Colonic mucosa (tissue), 4 donors: ENCODE measurements at regions of chr2 and their contacts with region 1.

Region 1: DNA sequence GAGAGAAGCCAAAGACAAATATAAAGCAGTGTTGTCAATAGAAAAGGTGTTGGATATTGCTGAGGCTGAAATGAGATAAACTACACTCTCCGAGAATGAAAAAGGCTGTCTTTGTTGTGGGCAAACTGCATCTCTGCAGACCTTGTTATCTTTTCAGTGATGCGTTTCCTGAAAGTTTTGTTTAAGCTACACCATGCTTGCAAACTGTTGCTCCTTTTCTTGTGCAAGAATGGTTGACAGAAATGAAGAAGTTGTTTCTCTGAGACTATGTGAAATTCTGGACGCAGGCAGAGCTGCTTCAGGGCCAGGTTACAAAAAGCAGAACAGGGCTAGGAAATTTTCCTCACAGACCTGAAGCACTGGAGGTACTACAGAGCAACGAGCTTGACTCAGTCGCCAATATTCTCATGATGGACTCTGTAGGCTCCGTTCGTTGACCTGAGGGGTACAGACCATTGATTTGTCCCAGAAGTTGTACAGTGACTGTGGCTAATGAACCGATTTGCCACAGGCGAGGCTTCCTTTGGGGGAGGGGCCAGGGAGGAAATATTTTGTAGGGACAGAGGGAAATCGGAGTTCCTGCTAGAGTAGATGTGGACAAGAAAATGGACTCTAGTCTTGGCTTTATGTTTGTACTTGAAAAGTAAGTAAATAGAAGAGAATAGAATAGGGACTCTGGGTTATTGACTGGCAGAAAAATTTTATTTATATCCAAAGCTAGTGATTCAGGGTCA is 3.5 kb upstream of the ATL2 start:
- DNase-seq: no peak
- H3K4me3 ChIP-seq: no peak overlapping the region
- H3K27ac ChIP-seq: no peak overlapping the region
- H3K4me1 ChIP-seq: no peaks in the 10 kb centered on the region
- H3K27me3 ChIP-seq: no peaks in the 10 kb centered on the region
- CTCF ChIP-seq: no peak

Region 2: GRCh38 chr2:37966326-37966725 is 414.2 kb before region 1 on chr2:
- intact Hi-C with region 1: no loop called
- DNase-seq: no peak
- H3K4me3 ChIP-seq: no peak overlapping the region
- H3K27ac ChIP-seq: no peak overlapping the region
- H3K4me1 ChIP-seq: no peaks in the 10 kb centered on the region
- H3K27me3 ChIP-seq: no peaks in the 10 kb centered on the region
- CTCF ChIP-seq: no peak

Region 3: DNA sequence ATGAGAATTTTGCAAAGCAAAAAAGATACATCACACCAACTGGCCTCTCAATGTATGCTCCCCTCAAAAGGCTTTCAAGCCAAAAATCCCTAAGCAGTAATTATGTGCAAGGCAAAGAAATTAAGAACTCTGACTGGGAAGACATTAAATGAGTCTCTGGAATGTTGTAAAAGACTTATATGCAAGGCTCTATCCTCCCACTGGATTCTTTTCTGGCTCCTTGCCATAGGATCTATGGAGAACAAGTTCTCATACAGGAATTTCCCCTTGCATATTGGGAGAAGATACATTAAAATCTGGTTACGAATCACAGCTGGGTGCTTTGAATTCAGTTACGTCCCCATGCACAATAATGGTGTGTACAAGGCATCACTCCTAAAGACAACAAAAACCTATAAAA is 69.9 kb after region 1 on chr2:
- intact Hi-C with region 1: loop called (anchors 10 kb)
- DNase-seq: no peak
- H3K4me3 ChIP-seq: no peak overlapping the region
- H3K27ac ChIP-seq: no peak overlapping the region
- H3K4me1 ChIP-seq: no peaks in the 10 kb centered on the region
- H3K27me3 ChIP-seq: no peaks in the 10 kb centered on the region
- CTCF ChIP-seq: no peak